ENCODE measurements at regions of chr3 and their contacts with region 1.

Region 1: DNA sequence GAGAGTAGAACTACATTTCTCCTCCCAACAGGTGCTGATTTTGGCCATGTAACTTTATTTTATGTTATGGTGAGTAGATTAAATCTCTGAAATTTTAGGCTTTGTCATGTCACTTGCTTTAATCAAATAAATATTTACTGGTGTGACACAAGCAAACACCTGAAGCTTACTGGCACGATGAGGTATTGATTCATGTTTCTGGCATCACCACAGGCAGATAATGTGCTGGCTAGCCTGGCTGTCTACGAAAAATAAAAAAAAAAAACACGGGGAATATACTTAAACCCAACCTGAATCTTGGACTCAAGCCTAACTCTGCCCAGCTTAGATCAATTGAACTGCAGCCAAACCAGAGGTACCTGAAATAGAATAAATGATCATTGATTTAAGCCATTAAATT is 65.6 kb upstream of the CADM2 start:
- DNase-seq: no peak
- ATAC-seq: no peak

Region 2: GRCh38 chr3:84836961-84837360 is 56.2 kb before region 1 on chr3:
- intact Hi-C with region 1: loop called (anchors 10 kb)
- DNase-seq: no peak
- ATAC-seq: no peak

Measured in Right ventricle myocardium superior (tissue), 1 donor.